B cell (primary cell): ENCODE measurements at regions of chr2 and their contacts with region 1.

Region 1: GRCh38 chr2:186485871-186486650 is at the start of gene ZC3H15:
- DNase-seq: peak; percentile 98
- ATAC-seq: peak; percentile 89
- H3K4me3 ChIP-seq: peak within 1 kb of the TSS; percentile 89 to 98 (median 95)
- H3K4me3 Mint-ChIP-seq: peak within 1 kb of the TSS; percentile 93
- H3K27ac ChIP-seq: peak within 1 kb of the TSS; percentile 97 to 99
- H3K27ac Mint-ChIP-seq: peak within 1 kb of the TSS; percentile 97
- H3K4me1 ChIP-seq: peaks cover 29 to 46% of the 10 kb centered on the region in 2 donors
- H3K4me1 Mint-ChIP-seq: peaks cover 58% of the 10 kb centered on the region
- H3K27me3 ChIP-seq: no peaks in the 10 kb centered on the region
- H3K27me3 Mint-ChIP-seq: no peaks in the 10 kb centered on the region
- CTCF ChIP-seq: no peak
- total RNA-seq, gene ZC3H15: 61.4 and 65.0 TPM in 2 replicates

Region 2: GRCh38 chr2:184598316-184599053 is 1887.6 kb before region 1 on chr2 and contains the start of gene ZNF804A:
- CTCF ChIA-PET with region 1: no interaction called
- POLR2A ChIA-PET with region 1: no interaction called
- intact Hi-C with region 1: loop called (anchors 2 kb)
- DNase-seq: peak; percentile 79
- ATAC-seq: peak; percentile 86
- H3K4me3 ChIP-seq: peak within 1 kb of the TSS; percentile 38 to 66 (median 62)
- H3K4me3 Mint-ChIP-seq: peak within 1 kb of the TSS; percentile 91
- H3K27ac ChIP-seq: peak within 1 kb of the TSS; percentile 37 to 73
- H3K27ac Mint-ChIP-seq: peak within 1 kb of the TSS; percentile 76
- H3K4me1 ChIP-seq: peaks cover 16 to 26% of the 10 kb centered on the region in 2 donors
- H3K4me1 Mint-ChIP-seq: peaks cover 28% of the 10 kb centered on the region
- H3K27me3 ChIP-seq: peaks cover 0 to 14% (median 8%) of the 10 kb centered on the region in 4 experiments
- H3K27me3 Mint-ChIP-seq: peaks cover 15% of the 10 kb centered on the region
- CTCF ChIP-seq: no peak
- total RNA-seq, gene ZNF804A: 2.4 TPM in 2 replicates

Region 3: DNA sequence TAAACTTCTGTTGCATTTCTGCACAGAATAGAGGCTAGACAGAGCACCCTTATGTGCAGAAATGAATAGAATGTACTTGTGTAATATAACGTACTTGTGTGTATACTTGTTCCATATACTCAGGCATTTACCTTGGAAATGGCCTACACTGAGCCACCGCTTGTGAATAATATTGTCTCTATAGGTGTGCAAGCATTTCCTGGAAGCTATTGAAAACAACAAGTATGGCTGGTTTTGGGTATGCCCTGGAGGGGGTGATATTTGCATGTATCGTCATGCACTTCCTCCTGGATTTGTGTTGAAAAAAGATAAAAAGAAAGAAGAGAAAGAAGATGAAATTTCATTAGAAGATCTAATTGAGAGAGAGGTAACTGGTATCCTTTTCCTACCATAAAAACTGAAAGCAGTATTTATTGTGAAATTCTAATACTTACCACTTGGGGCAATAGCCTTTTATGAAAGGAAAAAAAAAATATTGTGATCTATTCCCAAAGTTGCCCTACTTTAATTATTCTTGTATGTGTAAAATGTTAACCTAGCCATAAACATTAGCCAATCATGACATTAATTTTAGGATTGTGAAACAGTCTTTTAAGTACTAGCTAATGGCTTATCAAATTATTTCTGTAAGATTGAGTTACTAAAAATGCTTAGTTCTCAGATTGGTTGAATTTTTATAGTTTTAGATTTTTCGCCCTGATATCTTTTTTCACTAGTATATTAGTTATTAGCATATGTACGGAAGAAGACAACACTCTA is 18.0 kb after region 1 on chr2:
- CTCF ChIA-PET with region 1: interaction called, 12 read pairs
- POLR2A ChIA-PET with region 1: interaction called, 4 read pairs
- intact Hi-C with region 1: no loop called
- DNase-seq: peak; percentile 40
- ATAC-seq: no peak
- H3K4me3 ChIP-seq: no peak overlapping the region
- H3K4me3 Mint-ChIP-seq: no peak overlapping the region
- H3K27ac ChIP-seq: no peak overlapping the region
- H3K27ac Mint-ChIP-seq: no peak overlapping the region
- H3K4me1 ChIP-seq: no peaks in the 10 kb centered on the region
- H3K4me1 Mint-ChIP-seq: peaks cover 5% of the 10 kb centered on the region
- H3K27me3 ChIP-seq: no peaks in the 10 kb centered on the region
- H3K27me3 Mint-ChIP-seq: no peaks in the 10 kb centered on the region
- CTCF ChIP-seq: peak; percentile 81

Region 4: GRCh38 chr2:186559848-186560247 is 73.8 kb after region 1 on chr2:
- CTCF ChIA-PET with region 1: no interaction called
- POLR2A ChIA-PET with region 1: no interaction called
- intact Hi-C with region 1: no loop called
- DNase-seq: no peak
- ATAC-seq: no peak
- H3K4me3 ChIP-seq: no peak overlapping the region
- H3K4me3 Mint-ChIP-seq: no peak overlapping the region
- H3K27ac ChIP-seq: no peak overlapping the region
- H3K27ac Mint-ChIP-seq: no peak overlapping the region
- H3K4me1 ChIP-seq: no peaks in the 10 kb centered on the region
- H3K4me1 Mint-ChIP-seq: no peaks in the 10 kb centered on the region
- H3K27me3 ChIP-seq: no peaks in the 10 kb centered on the region
- H3K27me3 Mint-ChIP-seq: peaks cover 12% of the 10 kb centered on the region
- CTCF ChIP-seq: no peak

Region 5: GRCh38 chr2:186589612-186590349 is 103.7 kb after region 1 on chr2 and contains the start of gene ITGAV:
- CTCF ChIA-PET with region 1: interaction called, 3 read pairs
- POLR2A ChIA-PET with region 1: interaction called, 5 read pairs
- intact Hi-C with region 1: loop called (anchors 1 kb)
- DNase-seq: peak; percentile 78
- ATAC-seq: peak; percentile 89
- H3K4me3 ChIP-seq: peak within 1 kb of the TSS; percentile 67 to 86 (median 77)
- H3K4me3 Mint-ChIP-seq: peak within 1 kb of the TSS; percentile 88
- H3K27ac ChIP-seq: peak within 1 kb of the TSS; percentile 19 to 60
- H3K27ac Mint-ChIP-seq: peak within 1 kb of the TSS; percentile 90
- H3K4me1 ChIP-seq: peaks cover 17% of the 10 kb centered on the region in 2 donors
- H3K4me1 Mint-ChIP-seq: peaks cover 20% of the 10 kb centered on the region
- H3K27me3 ChIP-seq: no peaks in the 10 kb centered on the region
- H3K27me3 Mint-ChIP-seq: peaks cover 17% of the 10 kb centered on the region
- CTCF ChIP-seq: no peak
- total RNA-seq, gene ITGAV: 3.6 and 6.0 TPM in 2 replicates